ENCODE measurements at regions of chr19 and their contacts with region 1.

Region 1: DNA sequence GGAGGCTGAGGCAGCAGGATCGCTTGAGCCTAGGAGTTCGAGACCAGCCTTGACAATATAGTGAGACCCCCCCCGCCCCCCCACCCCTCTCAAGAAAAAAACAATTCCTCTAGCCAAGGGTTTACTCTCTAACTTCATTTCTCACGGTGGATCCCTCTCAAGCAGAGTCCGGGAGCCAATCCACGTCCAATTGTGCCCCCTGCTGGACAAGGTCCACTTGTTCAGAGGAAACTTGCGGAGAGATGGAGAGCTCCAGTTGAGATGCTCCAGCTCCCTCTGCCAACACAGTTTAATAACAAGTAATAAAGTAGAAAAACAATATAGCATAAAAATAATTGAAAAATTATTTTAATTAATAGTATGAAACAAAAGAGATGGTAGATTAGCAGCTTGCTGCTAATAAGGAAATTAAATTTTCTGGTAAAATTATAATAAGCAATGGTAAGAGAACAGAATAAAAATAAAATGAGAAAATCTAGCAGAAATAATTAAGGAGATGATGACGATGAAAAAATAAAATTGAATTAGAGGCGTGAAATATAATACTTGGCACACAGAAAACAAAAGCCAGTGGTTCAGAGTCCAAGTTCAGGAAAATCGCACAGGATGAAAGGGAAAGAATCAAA is 14.5 kb upstream of the SIGLEC14 start:
- DNase-seq: peak; percentile 88
- ATAC-seq: peak; percentile 72
- H3K4me3 Mint-ChIP-seq: no peak overlapping the region
- H3K27ac Mint-ChIP-seq: no peak overlapping the region
- H3K4me1 Mint-ChIP-seq: peaks cover 6% of the 10 kb centered on the region
- H3K27me3 Mint-ChIP-seq: peaks cover 26% of the 10 kb centered on the region
- CTCF ChIP-seq: peak; percentile 46

Region 2: GRCh38 chr19:51296336-51297093 is 364.6 kb before region 1 on chr19:
- CTCF ChIA-PET with region 1: interaction called, 11 read pairs
- POLR2A ChIA-PET with region 1: no interaction called
- DNase-seq: peak; percentile 42
- ATAC-seq: peak; percentile 61
- H3K4me3 Mint-ChIP-seq: no peak overlapping the region
- H3K27ac Mint-ChIP-seq: no peak overlapping the region
- H3K4me1 Mint-ChIP-seq: peaks cover 57% of the 10 kb centered on the region
- H3K27me3 Mint-ChIP-seq: peaks cover 5% of the 10 kb centered on the region; the same call in 1 of the 2 replicates
- CTCF ChIP-seq: no peak

Region 3: GRCh38 chr19:51422053-51422448 is 239.0 kb before region 1 on chr19:
- CTCF ChIA-PET with region 1: interaction called, 39 read pairs
- POLR2A ChIA-PET with region 1: no interaction called
- DNase-seq: peak; percentile 97
- ATAC-seq: peak; percentile 86
- H3K4me3 Mint-ChIP-seq: peak overlapping the region; percentile 59
- H3K27ac Mint-ChIP-seq: no peak overlapping the region
- H3K4me1 Mint-ChIP-seq: peaks cover 5% of the 10 kb centered on the region; the same call in 1 of the 2 replicates
- H3K27me3 Mint-ChIP-seq: peaks cover 55% of the 10 kb centered on the region
- CTCF ChIP-seq: peak; percentile 100

Region 4: GRCh38 chr19:51564791-51565190 is 96.3 kb before region 1 on chr19:
- CTCF ChIA-PET with region 1: interaction called, 13 read pairs
- POLR2A ChIA-PET with region 1: no interaction called
- DNase-seq: peak; percentile 57
- ATAC-seq: peak; percentile 98
- H3K4me3 Mint-ChIP-seq: no peak overlapping the region
- H3K27ac Mint-ChIP-seq: no peak overlapping the region
- H3K4me1 Mint-ChIP-seq: no peaks in the 10 kb centered on the region
- H3K27me3 Mint-ChIP-seq: peaks cover 76% of the 10 kb centered on the region
- CTCF ChIP-seq: no peak

Region 5: DNA sequence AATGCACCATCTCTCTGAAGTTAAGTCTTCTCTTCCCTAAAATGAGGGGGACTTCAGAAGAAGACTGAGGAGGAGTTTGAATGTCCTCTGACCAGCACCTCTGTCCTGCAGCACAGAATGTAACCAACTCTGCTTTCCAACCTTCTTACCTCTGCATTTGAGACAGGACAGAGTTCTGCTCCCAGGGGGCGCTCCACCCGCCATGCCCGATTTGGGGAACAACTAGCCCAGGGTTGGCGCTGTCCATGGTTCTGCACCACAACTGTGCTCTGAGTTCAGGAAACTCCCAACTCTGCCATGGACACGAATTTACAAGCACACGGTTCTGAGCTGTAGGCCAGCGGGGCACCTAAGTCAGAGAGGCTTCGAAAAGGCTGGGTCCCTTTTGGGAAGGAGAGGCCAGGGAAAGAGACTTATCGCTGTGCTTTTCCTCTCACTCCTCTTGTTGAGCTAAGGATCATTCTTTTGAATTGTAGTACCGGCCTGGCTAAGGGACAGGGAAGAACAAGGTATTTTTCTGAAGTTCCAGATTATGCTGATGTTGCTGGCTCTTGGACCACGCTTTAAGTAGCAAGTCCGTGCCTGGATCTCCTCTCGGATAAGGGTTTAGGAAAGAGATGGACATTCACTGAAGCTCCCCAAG is 53.0 kb before region 1 on chr19:
- CTCF ChIA-PET with region 1: interaction called, 25 read pairs
- POLR2A ChIA-PET with region 1: no interaction called
- DNase-seq: peak; percentile 98
- ATAC-seq: peak; percentile 95
- H3K4me3 Mint-ChIP-seq: no peak overlapping the region
- H3K27ac Mint-ChIP-seq: no peak overlapping the region
- H3K4me1 Mint-ChIP-seq: no peaks in the 10 kb centered on the region
- H3K27me3 Mint-ChIP-seq: peaks cover 64% of the 10 kb centered on the region
- CTCF ChIP-seq: peak; percentile 80

Region 6: GRCh38 chr19:51688672-51689571 is 27.8 kb after region 1 on chr19:
- CTCF ChIA-PET with region 1: interaction called, 14 read pairs
- POLR2A ChIA-PET with region 1: no interaction called
- DNase-seq: peak; percentile 81
- ATAC-seq: peak; percentile 25
- H3K4me3 Mint-ChIP-seq: peak overlapping the region; percentile 86
- H3K27ac Mint-ChIP-seq: peak overlapping the region; percentile 73
- H3K4me1 Mint-ChIP-seq: peaks cover 40% of the 10 kb centered on the region
- H3K27me3 Mint-ChIP-seq: peaks cover 8% of the 10 kb centered on the region; the same call in 1 of the 2 replicates
- CTCF ChIP-seq: no peak